PC-9 (cell line): ENCODE measurements at regions of chr9 and their contacts with region 1.

Region 1: DNA sequence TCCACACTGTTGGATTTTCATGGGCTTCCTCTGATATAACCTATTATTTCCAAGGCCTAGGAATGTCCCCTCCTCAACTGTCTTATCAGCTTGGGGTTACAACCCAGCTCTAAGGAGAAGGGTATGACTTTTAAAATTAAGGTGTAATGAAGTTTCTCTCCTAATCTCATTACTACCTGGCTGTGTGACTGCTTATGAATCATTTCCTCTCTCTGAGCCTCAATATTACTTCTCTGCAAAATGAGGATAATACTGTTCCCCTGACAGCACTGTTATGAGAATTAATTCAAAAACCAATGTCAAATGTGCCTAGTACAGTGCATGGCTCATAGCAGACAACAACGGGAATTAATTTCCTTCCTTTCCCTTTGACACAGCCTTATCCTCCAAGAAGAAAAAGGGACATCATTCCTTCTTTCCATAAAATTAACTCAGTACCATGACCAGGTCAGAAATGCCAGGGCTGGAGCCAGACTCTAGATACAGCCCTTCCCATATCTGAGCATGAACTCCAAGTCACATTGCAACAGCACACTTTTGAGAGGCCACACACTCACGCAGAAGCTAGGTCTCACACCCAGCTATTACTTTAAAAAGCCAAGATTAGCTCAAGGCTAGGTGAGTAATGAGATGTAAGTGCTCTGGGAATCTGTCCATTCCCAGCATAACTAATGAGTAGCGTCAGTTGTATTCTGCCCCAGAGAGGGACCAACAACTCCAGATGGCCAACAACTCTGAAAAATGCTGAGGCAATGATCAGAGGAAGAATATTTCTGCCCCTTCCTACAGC is 118.7 kb downstream of the NR6A1 start:
- DNase-seq: peak; percentile 63 to 97
- H3K4me3 ChIP-seq: no peak overlapping the region; the same call in 1 of the 2 replicates
- H3K27ac ChIP-seq: peak overlapping the region; percentile 93
- H3K4me1 ChIP-seq: peaks cover 33% of the 10 kb centered on the region
- H3K27me3 ChIP-seq: no peaks in the 10 kb centered on the region
- CTCF ChIP-seq: no peak

Region 2: GRCh38 chr9:124611106-124611505 is 41.3 kb before region 1 on chr9:
- CTCF ChIA-PET with region 1: no interaction called
- POLR2A ChIA-PET with region 1: interaction called, 21 read pairs
- intact Hi-C with region 1: no loop called
- DNase-seq: no peak
- H3K4me3 ChIP-seq: no peak overlapping the region
- H3K27ac ChIP-seq: no peak overlapping the region
- H3K4me1 ChIP-seq: no peaks in the 10 kb centered on the region
- H3K27me3 ChIP-seq: no peaks in the 10 kb centered on the region
- CTCF ChIP-seq: no peak

Region 3: DNA sequence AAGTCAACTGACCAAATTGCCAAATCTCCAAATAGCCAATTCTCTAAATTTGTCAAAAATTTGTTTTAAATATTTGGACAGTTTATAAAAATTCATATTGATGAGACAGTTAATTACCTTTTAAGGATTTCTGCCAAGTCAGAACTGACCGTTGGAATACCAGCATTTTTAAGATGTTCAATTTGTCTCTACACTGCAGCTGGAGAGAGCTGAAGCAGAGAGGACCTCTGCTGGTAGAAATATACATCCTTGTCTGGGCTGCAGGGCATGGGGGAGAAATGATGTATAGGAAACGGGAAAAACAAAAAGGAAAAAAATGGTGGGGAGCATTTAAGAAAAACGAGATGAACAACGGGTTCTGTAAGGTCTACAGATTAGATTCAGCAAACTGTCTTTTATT is 101.9 kb after region 1 on chr9:
- CTCF ChIA-PET with region 1: no interaction called
- POLR2A ChIA-PET with region 1: no interaction called
- intact Hi-C with region 1: no loop called
- DNase-seq: no peak
- H3K4me3 ChIP-seq: no peak overlapping the region
- H3K27ac ChIP-seq: no peak overlapping the region
- H3K4me1 ChIP-seq: peaks cover 27% of the 10 kb centered on the region
- H3K27me3 ChIP-seq: no peaks in the 10 kb centered on the region
- CTCF ChIP-seq: peak; percentile 33; the same call in 1 of the 2 replicates

Region 4: GRCh38 chr9:125218621-125219020 is 566.2 kb after region 1 on chr9:
- CTCF ChIA-PET with region 1: no interaction called
- POLR2A ChIA-PET with region 1: no interaction called
- intact Hi-C with region 1: no loop called
- DNase-seq: no peak
- H3K4me3 ChIP-seq: no peak overlapping the region
- H3K27ac ChIP-seq: no peak overlapping the region
- H3K4me1 ChIP-seq: no peaks in the 10 kb centered on the region
- H3K27me3 ChIP-seq: no peaks in the 10 kb centered on the region
- CTCF ChIP-seq: no peak